Colonic mucosa (tissue), 4 donors: ENCODE measurements at regions of chr15 and their contacts with region 1.

Region 1: DNA sequence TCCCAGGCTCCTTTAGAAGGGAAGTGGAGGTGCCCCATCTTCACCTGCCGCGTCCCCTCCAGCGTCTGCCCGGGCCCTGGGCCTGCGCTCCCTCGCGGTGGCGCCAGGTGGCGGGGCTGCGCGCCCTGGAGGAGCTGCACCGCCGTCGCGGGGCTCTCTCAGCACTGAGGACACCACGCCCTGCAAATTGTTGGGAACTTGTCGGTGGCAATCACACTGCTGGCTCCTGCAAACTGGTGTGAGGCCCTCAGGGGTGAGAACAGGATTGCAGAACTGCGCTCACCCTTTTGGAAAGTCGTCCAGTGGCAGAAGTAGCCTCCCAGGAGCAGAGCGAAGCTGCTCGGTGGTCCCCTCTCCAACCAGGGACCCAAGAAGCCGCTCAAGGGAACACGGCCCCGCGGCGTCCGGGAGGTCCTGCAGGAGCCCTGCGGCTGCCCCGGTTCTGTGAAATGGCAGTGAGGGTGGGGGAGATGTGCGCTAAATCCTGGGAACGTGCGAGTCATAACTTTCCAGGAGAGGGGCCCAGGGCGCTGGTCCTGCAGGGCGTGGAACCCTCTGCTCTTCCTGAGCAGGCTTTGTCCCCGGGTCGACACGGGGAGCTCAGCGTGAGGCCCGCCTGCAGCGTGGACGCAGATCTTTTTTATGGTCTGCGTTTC is 995 bp upstream of the LRRK1 start:
- DNase-seq: peak; percentile 88
- H3K4me3 ChIP-seq: peak overlapping the region; percentile 65
- H3K27ac ChIP-seq: peak overlapping the region; percentile 77
- H3K4me1 ChIP-seq: peaks cover 5% of the 10 kb centered on the region
- H3K27me3 ChIP-seq: no peaks in the 10 kb centered on the region
- CTCF ChIP-seq: peak; percentile 94

Region 2: GRCh38 chr15:101008158-101009139 is 90.3 kb after region 1 on chr15:
- intact Hi-C with region 1: loop called (anchors 2 kb)
- DNase-seq: peak; percentile 91
- H3K4me3 ChIP-seq: peak overlapping the region; percentile 36
- H3K27ac ChIP-seq: no peak overlapping the region
- H3K4me1 ChIP-seq: peaks cover 4% of the 10 kb centered on the region
- H3K27me3 ChIP-seq: no peaks in the 10 kb centered on the region
- CTCF ChIP-seq: peak; percentile 94

Region 3: GRCh38 chr15:101269479-101270223 is 351.5 kb after region 1 on chr15:
- intact Hi-C with region 1: loop called (anchors 10 kb)
- DNase-seq: no peak
- H3K4me3 ChIP-seq: no peak overlapping the region
- H3K27ac ChIP-seq: no peak overlapping the region
- H3K4me1 ChIP-seq: no peaks in the 10 kb centered on the region
- H3K27me3 ChIP-seq: no peaks in the 10 kb centered on the region
- CTCF ChIP-seq: no peak